A673 (cell line): ENCODE measurements at regions of chr11 and their contacts with region 1.

Region 1: DNA sequence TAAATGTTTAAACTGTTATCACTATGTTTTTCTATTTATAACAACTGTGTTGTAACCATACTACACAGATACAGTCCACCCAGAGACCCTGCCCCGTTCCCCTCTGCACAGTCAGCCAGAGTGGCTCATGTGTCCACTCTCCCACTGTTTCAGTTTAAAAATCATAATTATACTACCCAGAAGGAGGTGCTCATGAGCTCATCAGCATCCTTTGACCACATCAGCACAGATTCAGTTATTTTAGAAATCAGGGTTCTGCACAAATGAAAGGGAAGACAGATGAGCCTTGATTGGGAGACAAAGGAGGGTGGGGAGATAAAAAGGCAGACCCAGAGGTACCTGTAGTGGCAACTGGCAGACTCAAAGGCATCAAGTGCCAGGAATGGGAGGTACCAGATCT is 124.3 kb downstream of the RCN1 start:
- DNase-seq: no peak
- H3K4me3 ChIP-seq: no peak overlapping the region
- H3K27ac ChIP-seq: no peak overlapping the region
- H3K4me1 ChIP-seq: no peaks in the 10 kb centered on the region
- H3K27me3 ChIP-seq: peaks cover 42% of the 10 kb centered on the region
- CTCF ChIP-seq: peak; percentile 70

Region 2: DNA sequence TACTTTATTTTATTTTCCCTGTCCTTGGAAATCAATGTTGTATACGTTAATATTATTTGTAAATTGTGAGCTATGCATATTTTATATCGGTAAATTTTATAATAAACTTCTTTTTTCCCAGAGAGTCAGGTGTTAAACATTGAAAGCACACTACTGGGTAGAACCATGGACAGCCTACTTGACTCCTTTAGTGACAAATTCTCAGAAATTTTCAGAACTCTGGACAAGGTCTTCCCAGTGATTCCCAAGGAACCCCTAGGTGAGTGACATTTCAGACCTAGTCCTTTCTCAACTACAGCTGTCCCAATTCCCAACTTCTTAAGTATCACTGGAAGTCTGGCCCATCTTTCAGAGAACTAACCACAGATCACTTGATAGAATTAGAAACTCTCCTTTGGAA is 17.1 kb before region 1 on chr11:
- CTCF ChIA-PET with region 1: interaction called, 11 read pairs
- POLR2A ChIA-PET with region 1: no interaction called
- intact Hi-C with region 1: no loop called
- DNase-seq: no peak
- H3K4me3 ChIP-seq: no peak overlapping the region
- H3K27ac ChIP-seq: no peak overlapping the region
- H3K4me1 ChIP-seq: no peaks in the 10 kb centered on the region
- H3K27me3 ChIP-seq: peaks cover 71% of the 10 kb centered on the region
- CTCF ChIP-seq: no peak

Region 3: GRCh38 chr11:32231905-32232493 is 16.8 kb after region 1 on chr11:
- CTCF ChIA-PET with region 1: interaction called, 14 read pairs
- POLR2A ChIA-PET with region 1: no interaction called
- intact Hi-C with region 1: no loop called
- DNase-seq: peak; percentile 86
- H3K4me3 ChIP-seq: no peak overlapping the region
- H3K27ac ChIP-seq: no peak overlapping the region
- H3K4me1 ChIP-seq: no peaks in the 10 kb centered on the region
- H3K27me3 ChIP-seq: peaks cover 38% of the 10 kb centered on the region
- CTCF ChIP-seq: peak; percentile 100